ENCODE measurements at regions of chr12 and their contacts with region 1.

Region 1: DNA sequence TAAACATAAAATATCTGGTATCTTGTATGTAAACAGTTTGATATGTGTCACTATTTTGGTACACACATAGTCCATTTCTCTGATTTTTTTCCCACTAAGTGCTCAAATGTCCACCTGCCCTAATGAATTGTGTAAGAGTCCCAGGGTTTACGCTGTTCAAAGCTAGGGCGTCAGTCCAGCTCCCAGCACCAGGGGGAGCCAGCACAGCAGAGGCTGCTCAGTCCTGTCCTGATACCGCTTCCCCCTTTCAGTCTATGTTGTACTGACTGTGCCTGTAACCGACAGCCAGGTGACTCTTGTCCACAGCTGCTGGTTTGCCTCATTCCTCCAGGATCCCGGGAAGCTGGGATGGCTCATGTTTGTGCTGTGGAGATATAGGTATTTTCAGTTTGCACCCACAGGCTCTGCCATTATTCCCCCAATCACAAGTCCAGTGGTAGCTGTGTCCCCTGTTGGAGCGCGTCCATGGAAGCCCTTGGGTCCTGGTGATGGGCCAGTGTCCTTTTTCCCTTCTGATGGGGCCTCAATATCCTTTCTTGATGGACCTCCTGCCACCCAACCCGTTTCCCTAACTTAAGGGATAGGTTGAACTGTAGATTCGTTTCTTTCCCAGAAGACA is 242.0 kb downstream of the NEDD1 start:
- DNase-seq: peak; percentile 62
- H3K4me3 ChIP-seq: no peak overlapping the region
- H3K27ac ChIP-seq: no peak overlapping the region
- H3K4me1 ChIP-seq: no peaks in the 10 kb centered on the region
- H3K27me3 ChIP-seq: no peaks in the 10 kb centered on the region
- CTCF ChIP-seq: peak; percentile 55
- EP300 ChIP-seq: no peak
- RAD21 ChIP-seq: peak; percentile 86

Region 2: GRCh38 chr12:97006585-97006984 is 142.5 kb before region 1 on chr12:
- CTCF ChIA-PET with region 1: no interaction called
- POLR2A ChIA-PET with region 1: no interaction called
- DNase-seq: no peak
- H3K4me3 ChIP-seq: no peak overlapping the region
- H3K27ac ChIP-seq: no peak overlapping the region
- H3K4me1 ChIP-seq: no peaks in the 10 kb centered on the region
- H3K27me3 ChIP-seq: no peaks in the 10 kb centered on the region
- CTCF ChIP-seq: no peak
- EP300 ChIP-seq: no peak
- RAD21 ChIP-seq: no peak

Region 3: GRCh38 chr12:97022536-97023230 is 126.4 kb before region 1 on chr12:
- CTCF ChIA-PET with region 1: no interaction called
- POLR2A ChIA-PET with region 1: no interaction called
- DNase-seq: no peak
- H3K4me3 ChIP-seq: no peak overlapping the region
- H3K27ac ChIP-seq: no peak overlapping the region
- H3K4me1 ChIP-seq: no peaks in the 10 kb centered on the region
- H3K27me3 ChIP-seq: no peaks in the 10 kb centered on the region
- CTCF ChIP-seq: no peak
- EP300 ChIP-seq: no peak
- RAD21 ChIP-seq: no peak

Region 4: DNA sequence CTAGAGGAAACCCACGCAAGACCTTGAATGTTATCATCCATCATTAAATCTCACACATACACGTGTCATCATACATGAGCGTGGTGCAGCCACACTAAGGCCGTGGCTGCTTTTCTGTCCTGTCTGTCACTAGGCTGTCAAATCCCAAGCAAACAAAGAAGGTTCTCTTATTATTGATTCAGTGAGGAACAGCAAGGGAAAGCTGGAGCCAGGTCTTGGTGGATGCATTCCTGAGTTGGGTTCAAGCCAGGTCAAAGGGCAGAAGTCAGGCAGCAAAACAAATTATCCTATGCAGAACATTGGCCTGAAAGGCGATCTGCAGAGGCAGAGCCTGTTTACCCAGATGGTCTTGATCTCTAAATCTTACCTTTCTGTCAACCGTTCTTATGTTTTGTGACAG is 10.3 kb after region 1 on chr12:
- CTCF ChIA-PET with region 1: interaction called, 10 read pairs
- POLR2A ChIA-PET with region 1: no interaction called
- DNase-seq: no peak
- H3K4me3 ChIP-seq: no peak overlapping the region
- H3K27ac ChIP-seq: no peak overlapping the region
- H3K4me1 ChIP-seq: no peaks in the 10 kb centered on the region; a peak in 1 of 4 replicates
- H3K27me3 ChIP-seq: no peaks in the 10 kb centered on the region
- CTCF ChIP-seq: no peak
- EP300 ChIP-seq: no peak
- RAD21 ChIP-seq: no peak

Region 5: GRCh38 chr12:97283297-97283696 is 134.2 kb after region 1 on chr12:
- CTCF ChIA-PET with region 1: no interaction called
- POLR2A ChIA-PET with region 1: no interaction called
- DNase-seq: peak; percentile 4
- H3K4me3 ChIP-seq: no peak overlapping the region
- H3K27ac ChIP-seq: no peak overlapping the region
- H3K4me1 ChIP-seq: no peaks in the 10 kb centered on the region
- H3K27me3 ChIP-seq: no peaks in the 10 kb centered on the region
- CTCF ChIP-seq: peak; percentile 22
- EP300 ChIP-seq: no peak
- RAD21 ChIP-seq: no peak

Region 6: GRCh38 chr12:97308576-97309198 is 159.6 kb after region 1 on chr12:
- CTCF ChIA-PET with region 1: interaction called, 54 read pairs
- POLR2A ChIA-PET with region 1: no interaction called
- DNase-seq: no peak
- H3K4me3 ChIP-seq: no peak overlapping the region
- H3K27ac ChIP-seq: no peak overlapping the region
- H3K4me1 ChIP-seq: peaks cover 0 to 7% of the 10 kb centered on the region in 2 experiments; a peak in 2 of 4 replicates
- H3K27me3 ChIP-seq: no peaks in the 10 kb centered on the region
- CTCF ChIP-seq: peak; percentile 75
- EP300 ChIP-seq: no peak
- RAD21 ChIP-seq: peak; percentile 70

Region 7: DNA sequence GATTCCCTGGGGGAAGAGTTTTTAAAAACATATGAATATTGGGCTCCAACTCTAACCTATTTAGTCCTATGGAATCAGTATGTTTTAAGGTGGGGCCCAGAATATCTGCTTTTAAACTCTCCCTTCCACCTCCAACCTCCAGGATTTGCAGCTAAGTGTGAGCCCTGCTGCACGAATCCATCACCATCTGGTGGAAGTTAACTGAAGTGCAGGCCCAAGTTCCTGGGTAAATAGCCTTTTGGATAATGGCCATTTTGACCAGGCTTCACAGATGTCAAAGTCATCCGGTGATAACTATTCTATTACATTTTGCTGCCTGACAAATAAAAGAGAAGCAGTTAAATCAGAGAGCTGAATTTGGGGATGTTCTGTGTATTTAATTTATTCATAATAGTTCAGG is 255.5 kb after region 1 on chr12:
- CTCF ChIA-PET with region 1: interaction called, 51 read pairs
- POLR2A ChIA-PET with region 1: no interaction called
- DNase-seq: peak; percentile 61
- H3K4me3 ChIP-seq: no peak overlapping the region; a peak in 1 of 4 replicates
- H3K27ac ChIP-seq: no peak overlapping the region
- H3K4me1 ChIP-seq: no peaks in the 10 kb centered on the region
- H3K27me3 ChIP-seq: no peaks in the 10 kb centered on the region
- CTCF ChIP-seq: peak; percentile 56
- EP300 ChIP-seq: no peak
- RAD21 ChIP-seq: peak; percentile 83